ENCODE measurements at regions of chr4 and their contacts with region 1.

Region 1: GRCh38 chr4:73019462-73020047 is 50.0 kb downstream of the COX18 start:
- DNase-seq: peak in 1 of 5 donors; percentile 27
- H3K4me3 ChIP-seq: no peak overlapping the region
- H3K27ac ChIP-seq: no peak overlapping the region
- H3K4me1 ChIP-seq: no peaks in the 10 kb centered on the region
- H3K27me3 ChIP-seq: no peaks in the 10 kb centered on the region
- CTCF ChIP-seq: peak; percentile 50 to 66 (median 55)
- EP300 ChIP-seq: no peak
- POLR2A ChIP-seq: no peak

Region 2: GRCh38 chr4:72295966-72296557 is 723.5 kb before region 1 on chr4:
- intact Hi-C with region 1: loop called in 1 of 4 experiments (anchors 10 kb)
- DNase-seq: no peak
- H3K4me3 ChIP-seq: no peak overlapping the region
- H3K27ac ChIP-seq: no peak overlapping the region
- H3K4me1 ChIP-seq: no peaks in the 10 kb centered on the region
- H3K27me3 ChIP-seq: no peaks in the 10 kb centered on the region
- CTCF ChIP-seq: peak in 2 of 3 donors; percentile 36 to 40
- EP300 ChIP-seq: no peak
- POLR2A ChIP-seq: no peak

Region 3: DNA sequence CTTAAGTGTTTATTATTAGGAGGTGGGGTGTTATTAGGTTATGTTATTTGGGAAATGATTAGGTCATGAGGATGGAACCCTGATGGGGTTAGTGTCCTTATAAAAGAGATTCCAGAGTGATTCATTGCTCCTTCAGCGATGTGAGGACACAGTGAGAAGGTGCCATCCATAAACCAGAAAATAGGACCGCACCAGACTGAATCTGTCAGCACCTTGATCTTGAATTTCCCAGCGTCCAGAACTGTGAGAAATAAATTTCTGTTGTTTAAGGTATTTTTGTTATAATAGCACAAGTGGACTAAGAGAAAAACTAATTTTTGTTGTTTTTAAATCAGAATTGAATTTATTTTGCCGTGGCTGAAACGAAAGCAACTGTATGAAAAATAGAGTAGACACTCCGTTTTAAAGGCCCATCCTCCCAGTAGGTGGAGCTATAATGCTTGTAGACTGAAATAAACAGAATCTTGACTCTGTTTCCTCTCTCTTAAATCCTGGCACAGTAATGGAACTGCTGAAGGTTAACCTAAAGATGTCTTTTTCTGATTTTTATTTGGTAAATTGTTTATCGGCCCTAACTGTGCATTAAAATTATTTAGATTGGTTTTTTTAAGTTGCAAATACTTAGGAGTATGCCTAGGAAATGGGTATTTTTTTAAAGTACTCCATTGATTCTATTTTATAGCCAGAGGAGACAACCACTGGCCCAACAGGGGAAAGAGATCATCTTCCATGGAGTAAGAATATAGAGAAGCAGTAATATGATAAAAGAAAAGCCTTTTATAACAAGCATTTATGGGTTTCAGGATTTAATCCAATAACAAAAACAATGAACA is 317.4 kb before region 1 on chr4:
- intact Hi-C with region 1: loop called in 1 of 4 experiments (anchors 5 kb)
- DNase-seq: peak in 2 of 5 donors; percentile 29 to 42
- H3K4me3 ChIP-seq: peak overlapping the region; percentile 23
- H3K27ac ChIP-seq: no peak overlapping the region
- H3K4me1 ChIP-seq: no peaks in the 10 kb centered on the region
- H3K27me3 ChIP-seq: no peaks in the 10 kb centered on the region
- CTCF ChIP-seq: peak; percentile 29 to 62 (median 30)
- EP300 ChIP-seq: no peak
- POLR2A ChIP-seq: no peak

Region 4: DNA sequence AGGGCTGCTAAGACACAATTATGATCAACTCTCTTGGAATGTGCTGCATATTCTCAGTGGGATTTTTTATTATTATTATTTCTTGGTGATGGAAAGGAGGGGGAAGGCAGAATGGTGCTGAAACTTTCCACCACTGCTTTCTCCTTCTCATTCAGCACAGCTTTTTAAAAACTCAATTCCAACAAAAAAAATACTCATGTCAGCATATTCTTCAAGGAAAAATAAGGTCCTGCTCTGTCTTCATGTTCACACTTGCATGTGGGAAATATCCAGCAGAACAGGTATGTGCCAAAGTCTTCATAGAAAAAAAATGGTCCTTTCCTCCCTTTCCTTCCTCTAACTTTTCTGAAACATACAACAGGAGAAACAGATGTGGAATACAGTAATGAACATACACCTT is 306.6 kb before region 1 on chr4:
- intact Hi-C with region 1: loop called in 1 of 4 experiments (anchors 10 kb)
- DNase-seq: no peak
- H3K4me3 ChIP-seq: no peak overlapping the region
- H3K27ac ChIP-seq: no peak overlapping the region
- H3K4me1 ChIP-seq: no peaks in the 10 kb centered on the region
- H3K27me3 ChIP-seq: no peaks in the 10 kb centered on the region
- CTCF ChIP-seq: no peak
- EP300 ChIP-seq: no peak
- POLR2A ChIP-seq: no peak

Region 5: DNA sequence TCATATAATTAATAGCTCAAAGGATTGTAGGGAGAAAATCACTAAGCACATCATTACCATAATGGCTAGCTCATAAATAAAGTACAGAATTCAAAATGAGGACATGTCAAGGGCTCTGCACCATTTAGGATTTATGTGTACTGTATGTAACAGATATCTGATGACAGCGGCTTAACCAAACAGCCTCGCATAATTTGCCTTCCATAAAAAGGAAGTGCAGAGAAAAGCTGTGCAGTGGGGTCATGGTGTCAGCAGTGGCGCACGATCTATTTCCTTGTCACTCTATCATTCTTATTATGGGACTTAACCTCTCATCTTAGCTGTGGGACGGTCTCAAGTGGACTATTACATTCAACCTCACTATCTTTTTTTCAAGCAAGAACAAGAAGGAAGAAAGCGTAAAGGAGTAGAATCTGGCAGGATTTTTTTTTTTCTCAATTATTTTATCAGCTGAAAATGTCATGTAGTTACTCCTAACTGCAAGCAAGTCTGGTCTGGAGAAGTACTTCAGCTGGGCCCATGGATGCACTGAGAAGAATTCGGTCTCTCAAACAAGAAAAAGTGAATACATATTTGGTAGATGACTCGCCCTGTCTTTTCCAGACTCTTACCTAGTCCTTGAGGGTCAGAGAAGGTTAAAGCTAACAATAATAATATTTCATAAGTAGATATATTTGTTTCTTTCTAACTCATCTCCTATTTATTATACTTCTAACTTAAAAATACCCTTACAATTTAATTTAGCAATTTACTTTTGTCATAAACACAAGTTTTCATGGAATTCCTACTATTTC is 44.7 kb before region 1 on chr4:
- intact Hi-C with region 1: no loop called
- DNase-seq: no peak
- H3K4me3 ChIP-seq: no peak overlapping the region
- H3K27ac ChIP-seq: no peak overlapping the region
- H3K4me1 ChIP-seq: no peaks in the 10 kb centered on the region
- H3K27me3 ChIP-seq: no peaks in the 10 kb centered on the region
- CTCF ChIP-seq: no peak
- EP300 ChIP-seq: no peak
- POLR2A ChIP-seq: no peak

Region 6: DNA sequence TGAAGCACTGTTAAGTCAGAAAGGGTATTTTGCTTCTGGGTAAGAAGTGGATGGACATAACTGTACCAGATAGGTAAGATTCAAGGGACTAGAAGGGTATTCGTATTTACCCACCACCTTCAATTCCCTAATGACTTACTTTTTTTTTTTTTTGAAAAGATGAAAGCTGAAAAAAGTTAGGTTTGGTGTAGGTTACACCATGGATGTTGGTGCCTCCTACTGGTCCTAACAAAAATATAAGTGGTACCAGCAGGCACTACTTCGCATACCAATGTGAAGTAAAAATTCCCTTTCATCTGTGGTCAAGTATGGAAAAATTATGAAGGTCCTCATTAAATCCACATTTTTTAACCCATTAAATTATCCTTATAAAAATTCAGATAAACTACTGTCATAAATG is 231.8 kb after region 1 on chr4:
- intact Hi-C with region 1: no loop called
- DNase-seq: no peak
- H3K4me3 ChIP-seq: no peak overlapping the region
- H3K27ac ChIP-seq: no peak overlapping the region
- H3K4me1 ChIP-seq: no peaks in the 10 kb centered on the region
- H3K27me3 ChIP-seq: no peaks in the 10 kb centered on the region
- CTCF ChIP-seq: no peak
- EP300 ChIP-seq: no peak
- POLR2A ChIP-seq: no peak

Region 7: DNA sequence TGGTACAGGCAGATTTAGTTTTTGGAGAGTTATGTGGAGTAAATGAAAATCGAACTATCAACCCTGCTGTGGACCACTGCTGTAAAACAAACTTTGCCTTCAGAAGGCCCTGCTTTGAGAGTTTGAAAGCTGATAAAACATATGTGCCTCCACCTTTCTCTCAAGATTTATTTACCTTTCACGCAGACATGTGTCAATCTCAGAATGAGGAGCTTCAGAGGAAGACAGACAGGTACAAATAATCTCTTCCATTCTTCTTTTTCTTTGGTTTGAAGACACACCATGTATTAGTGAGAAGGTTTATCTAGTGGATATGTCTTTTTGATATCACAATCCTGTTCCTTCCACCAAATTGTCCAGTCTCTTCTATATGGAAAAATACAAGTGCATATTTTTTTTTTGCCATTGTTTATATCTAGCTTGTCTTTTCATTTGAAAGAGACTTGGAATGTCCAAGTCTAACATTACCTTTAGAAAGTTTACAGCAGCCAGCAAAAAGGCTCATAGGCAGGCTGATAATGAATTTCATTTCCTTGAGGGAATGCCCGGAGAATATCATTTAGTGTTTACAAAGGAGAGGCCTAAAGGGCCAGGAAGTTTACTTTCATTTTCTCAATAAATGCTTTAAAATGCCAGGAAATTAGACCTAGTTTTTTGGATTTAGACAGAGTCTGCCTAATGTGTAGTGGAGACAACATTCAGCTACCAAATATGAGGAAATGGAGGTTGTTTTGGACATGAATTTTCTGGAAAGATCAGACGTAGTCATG is 480.6 kb after region 1 on chr4:
- intact Hi-C with region 1: no loop called
- DNase-seq: no peak
- H3K4me3 ChIP-seq: no peak overlapping the region
- H3K27ac ChIP-seq: no peak overlapping the region
- H3K4me1 ChIP-seq: no peaks in the 10 kb centered on the region
- H3K27me3 ChIP-seq: no peaks in the 10 kb centered on the region
- CTCF ChIP-seq: no peak
- EP300 ChIP-seq: no peak
- POLR2A ChIP-seq: no peak